CD8-positive, alpha-beta T cell (primary cell): ENCODE measurements at regions of chr11 and their contacts with region 1.

Region 1: GRCh38 chr11:1309498-1310317 is at the start of gene TOLLIP:
- DNase-seq: peak; percentile 96 to 99 (median 97)
- ATAC-seq: peak; percentile 76
- H3K4me3 ChIP-seq: peak within 1 kb of the TSS; percentile 83 to 84
- H3K4me3 Mint-ChIP-seq: peak within 1 kb of the TSS; percentile 90
- H3K27ac ChIP-seq: peak within 1 kb of the TSS; percentile 86 to 95
- H3K27ac Mint-ChIP-seq: peak within 1 kb of the TSS; percentile 97
- H3K4me1 ChIP-seq: peaks cover 49% of the 10 kb centered on the region
- H3K4me1 Mint-ChIP-seq: peaks cover 49% of the 10 kb centered on the region
- H3K27me3 ChIP-seq: no peaks in the 10 kb centered on the region
- H3K27me3 Mint-ChIP-seq: no peaks in the 10 kb centered on the region
- CTCF ChIP-seq: no peak
- total RNA-seq, gene TOLLIP: 36.2 to 40.9 TPM

Region 2: DNA sequence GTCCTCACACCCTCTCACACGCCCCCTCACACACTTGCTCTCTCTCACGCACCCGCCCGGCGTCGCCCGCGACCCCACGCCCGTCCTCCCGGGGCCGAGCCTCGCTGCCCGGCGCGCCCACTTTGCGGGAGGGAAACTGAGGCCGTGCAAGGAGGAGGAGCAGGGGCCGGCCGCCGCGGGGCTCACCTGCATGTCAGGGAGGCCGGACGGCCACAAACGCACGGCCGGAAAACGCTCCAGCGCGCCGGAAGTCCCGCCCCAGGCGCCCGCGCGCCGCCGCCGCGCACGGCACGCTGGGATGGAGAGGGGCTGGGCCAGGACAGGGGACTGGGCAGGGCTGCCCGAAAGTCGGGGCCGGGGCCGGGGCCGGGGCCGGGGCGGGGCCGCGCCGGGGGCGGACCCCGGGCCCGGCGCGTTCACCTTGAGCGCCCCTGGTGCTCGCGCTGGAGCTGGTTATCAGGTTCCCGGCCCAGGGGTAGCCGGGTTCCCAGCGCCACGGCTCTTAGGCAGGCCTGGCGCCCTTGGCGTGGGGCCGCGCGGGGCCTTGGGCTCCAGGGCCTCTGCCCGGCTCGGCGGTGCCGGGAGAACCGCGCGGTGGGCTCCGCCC is 399.0 kb before region 1 on chr11 and contains the start of gene CHID1:
- CTCF ChIA-PET with region 1: no interaction called
- POLR2A ChIA-PET with region 1: no interaction called
- intact Hi-C with region 1: no loop called
- DNase-seq: peak; percentile 51 to 89 (median 80)
- ATAC-seq: peak; percentile 94
- H3K4me3 ChIP-seq: peak within 1 kb of the TSS; percentile 63 to 92
- H3K4me3 Mint-ChIP-seq: peak within 1 kb of the TSS; percentile 91
- H3K27ac ChIP-seq: peak within 1 kb of the TSS; percentile 28 to 47
- H3K27ac Mint-ChIP-seq: peak within 1 kb of the TSS; percentile 71
- H3K4me1 ChIP-seq: peaks cover 16% of the 10 kb centered on the region
- H3K4me1 Mint-ChIP-seq: peaks cover 23% of the 10 kb centered on the region
- H3K27me3 ChIP-seq: no peaks in the 10 kb centered on the region
- H3K27me3 Mint-ChIP-seq: no peaks in the 10 kb centered on the region
- CTCF ChIP-seq: no peak
- total RNA-seq, gene CHID1: 16.0 to 18.1 TPM

Region 3: DNA sequence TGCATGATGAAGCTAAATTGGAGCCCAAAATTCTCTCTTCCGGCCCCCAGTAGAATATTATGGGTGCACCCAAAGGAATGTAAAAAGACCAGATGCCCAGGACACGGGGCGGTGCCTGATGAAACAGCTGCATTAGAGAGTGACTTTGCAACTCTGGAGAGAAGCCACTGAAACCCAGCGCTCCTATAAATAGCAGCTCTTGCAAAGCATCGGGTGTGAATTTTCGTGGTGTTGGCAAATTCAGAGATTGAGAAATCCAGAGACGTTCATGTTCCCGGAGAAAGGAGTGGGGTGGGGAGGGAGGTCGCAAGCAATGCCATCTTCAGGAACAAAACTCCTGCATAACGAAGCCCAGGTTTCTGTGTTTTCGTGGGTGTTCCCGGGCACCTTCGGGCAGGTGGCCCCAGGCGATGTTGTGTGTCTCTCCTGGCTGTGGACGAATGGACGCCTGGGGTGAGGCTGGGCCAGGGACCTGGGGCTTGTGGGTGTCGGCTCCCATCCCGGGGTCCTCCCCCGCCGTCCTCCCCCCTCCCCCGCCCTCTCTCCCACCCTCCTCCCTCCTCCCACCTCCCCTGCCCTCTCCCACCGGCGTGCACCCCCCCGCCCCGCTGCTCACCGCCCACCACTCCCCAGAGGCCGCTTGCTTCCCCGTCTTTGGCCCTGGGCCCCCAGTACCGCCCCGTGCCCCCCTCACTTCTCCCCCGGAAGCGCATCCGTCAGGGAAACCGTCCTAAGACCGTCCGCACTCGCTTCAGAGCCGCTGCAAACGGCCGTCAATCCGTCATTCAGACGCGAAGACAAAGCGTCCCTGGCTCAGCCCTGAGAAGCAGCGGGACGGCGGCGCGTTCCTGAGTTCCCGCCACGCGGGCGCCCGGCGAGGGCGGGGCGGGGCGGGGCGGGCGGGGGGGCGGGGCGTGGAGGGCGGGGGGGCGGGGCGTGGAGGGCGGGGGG is 26.4 kb after region 1 on chr11:
- CTCF ChIA-PET with region 1: no interaction called
- POLR2A ChIA-PET with region 1: interaction called, 15 read pairs
- intact Hi-C with region 1: loop called (anchors 1 kb)
- DNase-seq: peak in 8 of 9 experiments; percentile 50 to 85 (median 66)
- ATAC-seq: peak; percentile 69
- H3K4me3 ChIP-seq: peak overlapping the region; percentile 45 to 60
- H3K4me3 Mint-ChIP-seq: peak overlapping the region; percentile 80
- H3K27ac ChIP-seq: peak overlapping the region in 1 of 2 experiments; percentile 19
- H3K27ac Mint-ChIP-seq: peak overlapping the region; percentile 71
- H3K4me1 ChIP-seq: peaks cover 12% of the 10 kb centered on the region
- H3K4me1 Mint-ChIP-seq: peaks cover 18% of the 10 kb centered on the region
- H3K27me3 ChIP-seq: no peaks in the 10 kb centered on the region
- H3K27me3 Mint-ChIP-seq: no peaks in the 10 kb centered on the region
- CTCF ChIP-seq: no peak

Region 4: GRCh38 chr11:1373536-1374214 is 64.0 kb after region 1 on chr11:
- CTCF ChIA-PET with region 1: no interaction called
- POLR2A ChIA-PET with region 1: no interaction called
- intact Hi-C with region 1: no loop called
- DNase-seq: no peak
- ATAC-seq: no peak
- H3K4me3 ChIP-seq: no peak overlapping the region
- H3K4me3 Mint-ChIP-seq: no peak overlapping the region
- H3K27ac ChIP-seq: no peak overlapping the region
- H3K27ac Mint-ChIP-seq: no peak overlapping the region
- H3K4me1 ChIP-seq: no peaks in the 10 kb centered on the region
- H3K4me1 Mint-ChIP-seq: no peaks in the 10 kb centered on the region
- H3K27me3 ChIP-seq: no peaks in the 10 kb centered on the region
- H3K27me3 Mint-ChIP-seq: no peaks in the 10 kb centered on the region
- CTCF ChIP-seq: no peak

Region 5: GRCh38 chr11:1389103-1389931 is 79.6 kb after region 1 on chr11:
- CTCF ChIA-PET with region 1: interaction called, 3 read pairs
- POLR2A ChIA-PET with region 1: interaction called, 5 read pairs
- intact Hi-C with region 1: loop called (anchors 1 kb)
- DNase-seq: peak; percentile 93 to 98 (median 97)
- ATAC-seq: peak; percentile 94
- H3K4me3 ChIP-seq: peak overlapping the region; percentile 66 to 78
- H3K4me3 Mint-ChIP-seq: peak overlapping the region; percentile 74
- H3K27ac ChIP-seq: no peak overlapping the region
- H3K27ac Mint-ChIP-seq: no peak overlapping the region
- H3K4me1 ChIP-seq: peaks cover 15% of the 10 kb centered on the region
- H3K4me1 Mint-ChIP-seq: peaks cover 11% of the 10 kb centered on the region
- H3K27me3 ChIP-seq: peaks cover 6 to 11% of the 10 kb centered on the region in 2 experiments
- H3K27me3 Mint-ChIP-seq: peaks cover 23% of the 10 kb centered on the region
- CTCF ChIP-seq: no peak

Region 6: GRCh38 chr11:1515082-1516060 is 205.7 kb after region 1 on chr11:
- CTCF ChIA-PET with region 1: no interaction called
- POLR2A ChIA-PET with region 1: no interaction called
- intact Hi-C with region 1: no loop called
- DNase-seq: peak; percentile 56 to 84 (median 74)
- ATAC-seq: peak; percentile 67
- H3K4me3 ChIP-seq: no peak overlapping the region
- H3K4me3 Mint-ChIP-seq: peak overlapping the region; percentile 26
- H3K27ac ChIP-seq: no peak overlapping the region
- H3K27ac Mint-ChIP-seq: peak overlapping the region; percentile 18
- H3K4me1 ChIP-seq: peaks cover 51% of the 10 kb centered on the region
- H3K4me1 Mint-ChIP-seq: peaks cover 70% of the 10 kb centered on the region
- H3K27me3 ChIP-seq: no peaks in the 10 kb centered on the region
- H3K27me3 Mint-ChIP-seq: no peaks in the 10 kb centered on the region
- CTCF ChIP-seq: peak; percentile 95